ENCODE measurements at regions of chr19 and their contacts with region 1.

Region 1: GRCh38 chr19:40716655-40717324 is at the starts of genes COQ8B and ITPKC:
- DNase-seq: peak; percentile 100
- ATAC-seq: peak; percentile 65
- H3K4me3 Mint-ChIP-seq: peak within 1 kb of the TSS; percentile 93
- H3K27ac Mint-ChIP-seq: peak within 1 kb of the TSS; percentile 98
- H3K4me1 Mint-ChIP-seq: peaks cover 59% of the 10 kb centered on the region
- H3K27me3 Mint-ChIP-seq: no peaks in the 10 kb centered on the region
- total RNA-seq, gene COQ8B: 21.2 to 29.9 TPM
- total RNA-seq, gene ITPKC: 4.6 to 5.6 TPM

Region 2: DNA sequence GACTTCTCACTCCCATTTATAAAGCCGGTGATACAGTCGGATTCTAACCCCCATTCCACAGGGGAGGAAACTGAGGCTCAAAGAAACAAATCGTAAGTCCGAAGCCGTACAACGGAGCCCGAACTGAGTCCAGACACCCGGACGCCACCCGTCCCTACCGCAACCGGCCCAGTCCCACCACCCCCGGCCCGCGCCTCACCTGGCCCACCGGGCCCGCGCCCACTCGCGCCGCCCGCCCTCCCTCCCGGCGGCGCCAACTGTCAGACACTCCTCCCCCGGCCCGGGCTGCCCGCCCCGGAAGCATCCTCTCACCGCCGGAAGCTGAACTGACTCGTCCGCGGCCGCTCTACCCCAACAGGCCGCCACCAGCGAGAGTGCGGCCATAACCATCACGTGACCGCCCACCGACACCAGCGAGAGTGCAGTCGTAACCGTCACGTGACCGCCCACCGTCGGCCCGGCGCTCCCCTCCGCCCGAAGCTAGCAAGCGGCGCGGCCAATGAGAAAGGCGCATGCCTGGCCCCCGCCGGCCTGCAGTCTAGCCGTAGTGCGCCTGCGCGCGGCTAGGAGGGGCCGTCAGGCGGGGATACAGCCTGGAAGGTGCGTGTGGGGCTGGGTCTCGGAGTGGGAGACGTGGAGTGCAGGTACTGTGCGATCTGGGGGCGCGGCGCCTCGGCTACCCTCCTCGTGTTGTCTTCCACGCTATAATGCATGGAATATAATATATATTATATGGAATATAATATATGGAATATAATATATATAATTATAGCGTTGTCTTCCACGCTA is 368.5 kb before region 1 on chr19 and contains the starts of genes C19orf47 and PLD3:
- CTCF ChIA-PET with region 1: no interaction called
- POLR2A ChIA-PET with region 1: no interaction called
- intact Hi-C with region 1: loop called in 1 of 2 experiments (anchors 1 kb)
- DNase-seq: peak; percentile 100
- ATAC-seq: peak; percentile 97
- H3K4me3 Mint-ChIP-seq: peak within 1 kb of the TSS; percentile 96
- H3K27ac Mint-ChIP-seq: peak within 1 kb of the TSS; percentile 91
- H3K4me1 Mint-ChIP-seq: peaks cover 26% of the 10 kb centered on the region
- H3K27me3 Mint-ChIP-seq: no peaks in the 10 kb centered on the region
- total RNA-seq, gene C19orf47: 15.8 to 17.7 TPM
- total RNA-seq, gene PLD3: 57.8 to 69.1 TPM

Region 3: DNA sequence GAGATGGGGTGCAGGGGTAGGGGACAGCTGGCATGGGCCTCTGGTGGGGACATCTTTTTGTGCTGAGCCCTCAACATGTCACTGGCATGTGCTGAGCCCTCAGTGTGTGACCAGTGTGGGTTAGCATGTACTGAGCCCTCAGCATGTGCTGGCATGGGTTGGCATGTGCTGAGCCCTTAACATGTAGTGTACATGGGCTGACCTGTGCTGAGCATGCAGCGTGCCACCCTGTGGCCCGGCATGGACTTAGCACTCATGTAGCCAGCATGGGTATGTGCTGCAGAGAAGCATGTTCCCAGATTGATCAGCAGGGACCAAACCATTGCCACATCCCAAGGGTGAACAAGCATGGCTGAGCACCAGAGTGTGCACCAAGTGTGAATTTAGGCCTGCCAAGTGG is 338.3 kb before region 1 on chr19:
- CTCF ChIA-PET with region 1: no interaction called
- POLR2A ChIA-PET with region 1: no interaction called
- intact Hi-C with region 1: no loop called
- DNase-seq: no peak
- ATAC-seq: no peak
- H3K4me3 Mint-ChIP-seq: no peak overlapping the region
- H3K27ac Mint-ChIP-seq: no peak overlapping the region
- H3K4me1 Mint-ChIP-seq: peaks cover 2% of the 10 kb centered on the region
- H3K27me3 Mint-ChIP-seq: no peaks in the 10 kb centered on the region

Region 4: DNA sequence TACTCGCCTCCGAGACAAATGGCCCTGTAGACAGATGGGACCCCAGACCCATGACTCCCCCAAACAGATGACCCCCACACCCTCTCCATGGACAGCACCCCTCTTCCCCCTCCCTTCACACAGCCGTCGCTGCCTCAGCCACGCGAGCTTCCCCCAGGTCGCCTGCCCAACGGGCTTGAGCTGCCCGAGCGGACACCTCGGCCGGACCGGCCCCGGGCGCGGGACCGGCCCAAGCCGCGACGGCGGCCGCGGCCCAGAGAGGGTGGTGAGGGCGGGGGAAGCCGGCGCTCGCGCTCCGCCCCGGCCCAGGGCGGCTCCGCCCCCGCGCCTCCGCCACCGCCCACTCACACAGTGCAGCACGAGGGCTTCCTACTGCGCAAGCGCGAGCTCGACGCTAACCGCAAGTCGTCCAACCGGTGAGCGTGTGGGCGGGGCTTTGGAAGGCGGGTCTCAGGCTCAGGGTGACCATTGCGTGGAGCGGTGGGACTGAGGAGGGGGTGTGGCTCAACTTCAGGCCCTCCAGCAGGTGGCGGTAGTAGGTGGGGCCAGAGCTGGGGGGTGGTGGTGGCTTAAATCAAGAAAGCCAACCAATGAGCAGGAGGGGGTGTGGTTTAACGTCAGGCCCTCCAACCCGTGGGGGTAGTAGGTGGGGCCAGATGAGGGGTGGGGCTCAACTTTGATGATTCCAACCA is 146.3 kb before region 1 on chr19:
- CTCF ChIA-PET with region 1: no interaction called
- POLR2A ChIA-PET with region 1: no interaction called
- intact Hi-C with region 1: loop called in 1 of 2 experiments (anchors 1 kb)
- DNase-seq: peak; percentile 97
- ATAC-seq: peak; percentile 94
- H3K4me3 Mint-ChIP-seq: peak overlapping the region; percentile 50
- H3K27ac Mint-ChIP-seq: peak overlapping the region; percentile 7
- H3K4me1 Mint-ChIP-seq: peaks cover 12% of the 10 kb centered on the region
- H3K27me3 Mint-ChIP-seq: peaks cover 19% of the 10 kb centered on the region

Region 5: GRCh38 chr19:40690693-40691420 is 25.9 kb before region 1 on chr19:
- CTCF ChIA-PET with region 1: no interaction called
- POLR2A ChIA-PET with region 1: no interaction called
- intact Hi-C with region 1: loop called (anchors 1 kb)
- DNase-seq: peak; percentile 97
- ATAC-seq: peak; percentile 85
- H3K4me3 Mint-ChIP-seq: peak overlapping the region; percentile 80
- H3K27ac Mint-ChIP-seq: peak overlapping the region; percentile 87
- H3K4me1 Mint-ChIP-seq: peaks cover 5% of the 10 kb centered on the region
- H3K27me3 Mint-ChIP-seq: no peaks in the 10 kb centered on the region

Region 6: GRCh38 chr19:40768869-40769268 is 52.1 kb after region 1 on chr19:
- CTCF ChIA-PET with region 1: no interaction called
- POLR2A ChIA-PET with region 1: no interaction called
- intact Hi-C with region 1: no loop called
- DNase-seq: no peak
- ATAC-seq: no peak
- H3K4me3 Mint-ChIP-seq: no peak overlapping the region
- H3K27ac Mint-ChIP-seq: no peak overlapping the region
- H3K4me1 Mint-ChIP-seq: peaks cover 19% of the 10 kb centered on the region
- H3K27me3 Mint-ChIP-seq: no peaks in the 10 kb centered on the region

Region 7: DNA sequence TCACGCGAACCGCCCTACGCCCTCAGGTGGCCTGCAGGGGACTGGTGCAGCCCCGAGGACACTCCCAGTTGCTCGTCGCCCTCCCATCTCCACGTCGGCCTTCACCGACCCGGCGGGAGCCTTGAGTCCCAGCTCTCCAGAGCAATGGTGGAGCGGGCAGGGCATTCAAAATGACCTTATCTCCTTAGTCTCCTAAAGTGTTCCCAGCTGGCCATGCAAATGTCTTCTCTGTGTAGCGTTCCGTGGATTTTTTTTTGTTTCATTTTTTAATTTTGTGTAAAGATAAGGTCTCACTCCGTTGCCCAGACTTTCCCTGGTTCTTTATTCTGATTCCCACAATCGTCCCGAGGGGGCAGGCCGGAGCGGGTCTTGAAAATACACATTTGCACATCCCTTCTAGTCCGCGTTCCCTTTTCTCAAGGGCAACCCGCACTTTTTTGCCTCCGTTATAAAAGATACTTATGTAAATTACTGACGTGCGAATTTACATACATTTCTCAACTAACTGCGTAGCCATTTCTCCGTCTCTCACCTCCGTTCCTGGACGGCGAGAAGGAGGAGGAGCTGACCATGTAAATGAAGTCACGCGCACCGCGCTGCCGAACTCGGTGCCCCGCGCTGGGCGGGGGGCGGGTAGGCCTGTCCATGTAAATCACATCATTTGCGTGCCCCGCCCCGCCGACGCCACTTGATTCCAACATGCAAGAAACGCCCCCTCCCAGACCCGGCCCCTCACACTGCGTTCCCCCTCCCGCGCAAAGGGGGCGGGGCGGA is 81.6 kb after region 1 on chr19:
- CTCF ChIA-PET with region 1: interaction called, 3 read pairs
- POLR2A ChIA-PET with region 1: interaction called, 6 read pairs
- intact Hi-C with region 1: loop called (anchors 1 to 2 kb)
- DNase-seq: peak; percentile 100
- ATAC-seq: peak; percentile 82
- H3K4me3 Mint-ChIP-seq: peak overlapping the region; percentile 91
- H3K27ac Mint-ChIP-seq: peak overlapping the region; percentile 97
- H3K4me1 Mint-ChIP-seq: peaks cover 49% of the 10 kb centered on the region
- H3K27me3 Mint-ChIP-seq: no peaks in the 10 kb centered on the region

Region 8: GRCh38 chr19:41353466-41354342 is 636.9 kb after region 1 on chr19 and contains the start of gene TGFB1:
- CTCF ChIA-PET with region 1: no interaction called
- POLR2A ChIA-PET with region 1: no interaction called
- intact Hi-C with region 1: loop called in 1 of 2 experiments (anchors 2 kb)
- DNase-seq: peak; percentile 96
- ATAC-seq: peak; percentile 45
- H3K4me3 Mint-ChIP-seq: peak within 1 kb of the TSS; percentile 96
- H3K27ac Mint-ChIP-seq: peak within 1 kb of the TSS; percentile 97
- H3K4me1 Mint-ChIP-seq: peaks cover 58% of the 10 kb centered on the region
- H3K27me3 Mint-ChIP-seq: no peaks in the 10 kb centered on the region
- total RNA-seq, gene TGFB1: 86.2 to 99.0 TPM